AG04450 (cell line): ENCODE measurements at regions of chr2 and their contacts with region 1.

Region 1: DNA sequence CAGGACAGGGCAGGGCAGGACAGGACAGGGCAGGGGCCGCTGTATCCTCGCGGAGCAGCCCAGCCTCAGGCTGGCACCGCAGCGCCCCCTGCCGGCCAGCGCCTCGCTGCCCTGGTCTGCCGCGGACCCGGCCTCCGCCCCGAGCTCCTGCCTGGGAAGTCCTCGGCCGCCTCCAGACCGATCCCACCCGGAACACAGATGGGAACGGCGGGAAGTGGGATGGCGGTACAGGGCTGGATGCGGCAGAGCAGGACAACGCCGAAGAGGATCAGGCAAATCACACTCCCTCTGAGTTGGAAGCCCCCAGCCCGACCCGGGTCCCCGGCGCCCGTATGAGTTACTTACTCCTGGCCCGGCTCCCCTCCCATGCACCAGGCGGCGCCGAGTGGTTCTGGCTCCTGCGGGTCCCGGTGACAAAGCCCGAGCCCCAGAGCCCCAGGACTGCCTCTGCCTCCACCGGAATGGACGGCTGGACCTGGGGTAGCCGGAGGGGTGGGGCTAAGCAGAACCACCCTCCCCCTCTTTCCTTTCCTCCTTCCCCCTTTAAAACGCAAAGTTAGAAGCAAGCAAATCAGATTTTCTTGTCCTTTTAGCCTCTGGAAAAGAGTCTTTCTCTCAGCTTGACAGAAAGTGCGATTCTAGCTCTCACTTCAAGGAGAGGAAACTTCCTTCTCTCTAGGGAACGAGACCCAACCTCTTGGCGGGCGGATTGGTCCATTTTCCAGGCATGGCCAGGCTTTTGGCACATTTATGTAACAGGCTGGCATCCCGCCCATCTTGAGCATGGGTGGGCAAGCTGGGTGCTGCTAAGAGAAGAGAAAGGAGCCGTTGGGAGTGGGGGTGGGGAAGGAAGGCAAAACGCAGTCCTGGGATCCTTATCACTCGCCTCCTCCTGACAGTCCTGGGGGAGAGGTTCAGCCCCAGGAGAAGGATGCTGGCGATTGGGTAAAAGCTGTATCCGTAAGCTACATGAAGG is at the start of gene TP53I3:
- DNase-seq: peak; percentile 74
- H3K4me3 ChIP-seq: peak within 1 kb of the TSS; percentile 73
- H3K27ac ChIP-seq: peak within 1 kb of the TSS; percentile 94
- H3K27me3 ChIP-seq: no peaks in the 10 kb centered on the region
- CTCF ChIP-seq: peak; percentile 76
- polyA plus RNA-seq, gene TP53I3: 44.6 and 55.2 TPM in 2 replicates

Region 2: DNA sequence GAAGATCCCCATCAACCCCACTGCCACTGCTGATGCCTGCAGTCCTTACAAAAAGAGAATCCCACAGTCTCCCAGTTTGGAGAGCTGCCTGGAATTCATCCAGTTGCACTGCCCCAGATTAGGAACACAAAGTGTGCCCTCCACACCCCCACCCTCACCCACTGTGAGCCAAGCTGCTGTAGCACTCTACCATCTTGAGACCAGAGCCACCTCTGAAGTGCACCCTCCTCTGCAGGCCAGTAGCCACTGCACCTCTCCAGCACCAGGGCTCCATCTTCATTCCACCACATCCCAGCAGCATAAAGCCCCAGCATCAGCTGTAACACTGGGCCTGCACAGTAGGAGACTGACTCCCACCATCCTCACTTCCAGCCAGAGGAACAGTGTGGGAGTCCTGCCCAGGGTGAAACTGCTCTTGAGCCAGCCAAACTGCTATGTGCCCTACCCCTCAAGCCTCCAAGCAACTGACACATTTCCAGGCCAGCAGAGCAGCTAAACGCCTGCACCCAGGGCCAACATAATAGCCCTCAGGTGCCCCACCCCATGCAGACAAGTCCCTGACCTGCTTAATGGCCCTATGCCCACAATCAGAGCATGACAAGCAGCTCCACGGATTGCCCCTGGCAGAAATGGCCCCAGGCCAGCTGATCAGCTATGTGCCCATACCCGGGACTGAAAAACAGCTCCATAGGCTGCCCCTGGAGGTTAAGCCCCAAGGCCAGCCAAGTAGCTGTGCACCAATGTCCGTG is 363.8 kb before region 1 on chr2:
- CTCF ChIA-PET with region 1: no interaction called
- POLR2A ChIA-PET with region 1: no interaction called
- DNase-seq: no peak
- H3K4me3 ChIP-seq: no peak overlapping the region
- H3K27ac ChIP-seq: no peak overlapping the region
- H3K27me3 ChIP-seq: no peaks in the 10 kb centered on the region
- CTCF ChIP-seq: no peak

Region 3: GRCh38 chr2:23939987-23940717 is 144.5 kb before region 1 on chr2 and contains the start of gene UBXN2A:
- CTCF ChIA-PET with region 1: interaction called, 3 read pairs
- POLR2A ChIA-PET with region 1: interaction called, 10 read pairs
- DNase-seq: no peak
- H3K4me3 ChIP-seq: peak within 1 kb of the TSS; percentile 80
- H3K27ac ChIP-seq: peak within 1 kb of the TSS; percentile 65
- H3K27me3 ChIP-seq: no peaks in the 10 kb centered on the region
- CTCF ChIP-seq: no peak
- polyA plus RNA-seq, gene UBXN2A: 9.0 and 13.1 TPM in 2 replicates

Region 4: GRCh38 chr2:23967846-23968245 is 116.8 kb before region 1 on chr2:
- CTCF ChIA-PET with region 1: no interaction called
- POLR2A ChIA-PET with region 1: no interaction called
- DNase-seq: no peak
- H3K4me3 ChIP-seq: no peak overlapping the region
- H3K27ac ChIP-seq: no peak overlapping the region
- H3K27me3 ChIP-seq: no peaks in the 10 kb centered on the region
- CTCF ChIP-seq: no peak

Region 5: DNA sequence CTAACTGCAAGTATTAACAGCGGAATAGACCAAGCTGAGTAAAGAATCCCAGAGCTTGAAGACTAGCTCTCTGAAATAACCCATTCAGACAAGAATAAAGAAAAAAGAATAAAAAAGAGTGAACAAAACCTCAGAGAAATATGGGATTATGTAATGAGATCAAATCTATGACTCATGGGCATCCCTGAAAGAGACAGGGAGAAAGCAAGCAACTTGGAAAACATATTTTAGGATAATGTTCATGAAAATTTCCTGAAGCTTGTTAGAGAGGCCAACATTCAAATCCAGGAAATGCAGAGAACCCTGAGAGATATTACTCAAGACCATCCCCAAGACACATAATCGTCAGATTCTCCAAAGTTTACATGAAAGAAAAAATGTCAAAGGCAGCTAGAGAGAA is 21.1 kb after region 1 on chr2:
- CTCF ChIA-PET with region 1: interaction called, 10 read pairs
- POLR2A ChIA-PET with region 1: no interaction called
- DNase-seq: no peak
- H3K4me3 ChIP-seq: no peak overlapping the region
- H3K27ac ChIP-seq: no peak overlapping the region
- H3K27me3 ChIP-seq: no peaks in the 10 kb centered on the region
- CTCF ChIP-seq: no peak

Region 6: GRCh38 chr2:24111407-24111901 is 26.8 kb after region 1 on chr2:
- CTCF ChIA-PET with region 1: interaction called, 10 read pairs
- POLR2A ChIA-PET with region 1: no interaction called
- DNase-seq: no peak
- H3K4me3 ChIP-seq: no peak overlapping the region
- H3K27ac ChIP-seq: no peak overlapping the region
- H3K27me3 ChIP-seq: no peaks in the 10 kb centered on the region
- CTCF ChIP-seq: no peak